Cardiac septum (tissue), 1 donor: ENCODE measurements at regions of chr4 and their contacts with region 1.

Region 1: GRCh38 chr4:12488672-12489071 is 995.5 kb downstream of the RAB28 start:
- DNase-seq: peak; percentile 86

Region 2: GRCh38 chr4:11487876-11488544 is 1000.7 kb before region 1 on chr4:
- intact Hi-C with region 1: no loop called
- DNase-seq: no peak

Region 3: DNA sequence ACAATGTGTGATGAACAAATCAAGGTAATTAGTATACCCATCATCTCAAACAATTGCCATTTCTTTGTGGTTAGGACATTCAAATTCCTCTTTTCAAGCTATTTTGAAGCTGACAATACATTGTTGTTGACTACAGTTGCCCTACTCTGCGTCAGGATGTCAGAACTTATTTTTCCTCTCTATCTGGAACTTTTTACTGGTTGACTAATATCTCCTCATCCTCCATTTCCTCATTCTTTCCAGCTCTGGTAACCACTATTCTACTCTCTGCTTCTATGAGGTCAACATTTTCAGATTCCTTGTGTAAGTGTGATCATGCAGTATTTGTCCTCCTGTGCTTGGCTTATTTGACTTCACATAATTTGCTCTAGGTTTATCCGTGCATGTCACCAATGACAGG is 819.5 kb before region 1 on chr4:
- intact Hi-C with region 1: no loop called
- DNase-seq: no peak

Region 4: GRCh38 chr4:12172198-12172973 is 316.3 kb before region 1 on chr4:
- intact Hi-C with region 1: loop called (anchors 5 kb)
- DNase-seq: no peak

Region 5: DNA sequence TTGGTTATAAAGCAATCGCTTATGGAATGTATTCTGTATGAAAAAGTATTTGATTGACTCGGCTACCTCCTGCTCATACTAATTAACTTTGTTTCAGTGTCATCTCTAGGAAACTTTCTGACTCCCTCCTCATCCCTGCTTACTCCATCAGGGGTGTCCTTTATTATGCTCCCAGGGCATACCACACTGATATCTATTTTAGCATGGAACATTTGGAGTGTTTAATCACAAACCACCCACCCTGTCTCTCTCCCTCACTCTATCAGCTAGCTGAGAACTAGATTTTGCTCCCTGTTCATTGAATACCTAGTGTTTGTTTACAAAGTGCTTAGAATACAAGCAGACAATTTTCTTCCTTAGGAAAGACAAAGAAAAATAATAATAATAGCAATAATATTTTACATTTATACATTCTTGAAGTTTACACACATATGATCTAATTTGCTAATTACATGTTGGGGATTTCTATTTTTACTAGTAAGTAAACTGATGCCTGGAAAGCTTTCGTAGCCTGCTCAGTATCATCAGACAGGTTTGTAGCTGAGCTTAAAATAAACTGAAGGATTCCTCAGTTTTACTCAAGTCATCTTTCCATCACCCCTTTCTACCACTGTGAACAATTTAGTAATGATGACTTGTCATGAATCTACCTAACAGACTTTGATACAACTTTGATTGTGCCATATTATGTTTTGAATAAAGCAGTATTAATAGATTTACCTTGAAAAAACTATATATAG is 248.6 kb before region 1 on chr4:
- intact Hi-C with region 1: loop called (anchors 2 kb)
- DNase-seq: no peak